Transverse colon (tissue), 4 donors: ENCODE measurements at regions of chr6 and their contacts with region 1.

Region 1: DNA sequence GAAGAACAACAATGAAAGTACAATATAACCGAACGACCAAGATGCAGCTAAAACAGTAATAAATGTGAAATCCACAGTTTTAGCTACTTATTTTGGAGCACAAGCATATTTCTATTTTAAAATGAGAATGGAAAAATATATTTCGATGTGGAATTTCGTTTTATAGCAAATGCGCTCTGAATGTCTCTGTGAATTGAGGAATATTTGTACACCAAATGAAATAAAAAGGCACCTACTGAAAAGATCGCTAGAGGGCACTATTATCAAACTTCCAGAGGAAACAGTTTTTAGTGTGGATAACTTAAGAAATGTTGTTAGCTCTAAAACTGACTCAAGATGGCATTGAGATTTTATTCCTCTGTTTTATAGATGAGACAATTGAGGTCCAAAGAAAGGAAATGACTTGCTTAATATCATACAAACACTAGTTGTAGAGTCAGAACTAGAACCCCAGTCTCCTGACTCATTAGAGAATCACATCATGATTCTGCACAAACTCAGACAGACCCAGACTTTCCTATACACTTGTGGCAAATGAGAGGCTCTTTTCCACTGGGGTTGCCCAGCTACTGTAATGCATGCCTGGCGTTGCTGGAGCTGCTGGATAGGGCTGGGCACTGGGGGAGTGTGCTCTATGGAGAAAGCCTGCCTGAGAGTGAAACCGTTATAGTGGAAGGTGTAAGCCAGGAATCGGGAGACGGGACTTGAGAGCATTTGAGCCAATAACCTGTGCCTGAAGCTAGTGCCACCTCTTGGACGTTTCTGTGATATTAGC is 51.9 kb downstream of the GCLC start:
- DNase-seq: no peak
- H3K4me3 ChIP-seq: no peak overlapping the region
- H3K27ac ChIP-seq: peak overlapping the region in 1 of 4 donors; percentile 5
- H3K4me1 ChIP-seq: peaks cover 0 to 20% (median 3%) of the 10 kb centered on the region in 4 donors
- H3K27me3 ChIP-seq: no peaks in the 10 kb centered on the region
- CTCF ChIP-seq: peak; percentile 71 to 84 (median 76)
- EP300 ChIP-seq: no peak
- POLR2A ChIP-seq: no peak

Region 2: GRCh38 chr6:53725791-53726431 is 232.9 kb after region 1 on chr6:
- in situ Hi-C with region 1: loop called in 3 of 4 experiments (anchors 5 to 10 kb)
- intact Hi-C with region 1: loop called (anchors 2 kb)
- DNase-seq: peak; percentile 82
- H3K4me3 ChIP-seq: no peak overlapping the region
- H3K27ac ChIP-seq: no peak overlapping the region
- H3K4me1 ChIP-seq: peaks cover 0 to 13% (median 0%) of the 10 kb centered on the region in 4 donors
- H3K27me3 ChIP-seq: no peaks in the 10 kb centered on the region
- CTCF ChIP-seq: peak; percentile 90 to 97 (median 94)
- EP300 ChIP-seq: no peak
- POLR2A ChIP-seq: no peak